Sigmoid colon (tissue), 7 donors: ENCODE measurements at regions of chr10 and their contacts with region 1.

Region 1: GRCh38 chr10:125060826-125061556 is 99.4 kb downstream of the CTBP2 start:
- DNase-seq: peak; percentile 93
- H3K4me3 ChIP-seq: peak overlapping the region in 3 of 4 donors; percentile 4 to 21 (median 14)
- H3K27ac ChIP-seq: peak overlapping the region; percentile 78 to 96 (median 84)
- H3K4me1 ChIP-seq: peaks cover 0 to 99% (median 98%) of the 10 kb centered on the region in 4 donors
- H3K27me3 ChIP-seq: no peaks in the 10 kb centered on the region
- CTCF ChIP-seq: peak; percentile 70 to 88 (median 86)
- EP300 ChIP-seq: peak in 2 of 4 donors; percentile 12 to 55
- POLR2A ChIP-seq: no peak

Region 2: DNA sequence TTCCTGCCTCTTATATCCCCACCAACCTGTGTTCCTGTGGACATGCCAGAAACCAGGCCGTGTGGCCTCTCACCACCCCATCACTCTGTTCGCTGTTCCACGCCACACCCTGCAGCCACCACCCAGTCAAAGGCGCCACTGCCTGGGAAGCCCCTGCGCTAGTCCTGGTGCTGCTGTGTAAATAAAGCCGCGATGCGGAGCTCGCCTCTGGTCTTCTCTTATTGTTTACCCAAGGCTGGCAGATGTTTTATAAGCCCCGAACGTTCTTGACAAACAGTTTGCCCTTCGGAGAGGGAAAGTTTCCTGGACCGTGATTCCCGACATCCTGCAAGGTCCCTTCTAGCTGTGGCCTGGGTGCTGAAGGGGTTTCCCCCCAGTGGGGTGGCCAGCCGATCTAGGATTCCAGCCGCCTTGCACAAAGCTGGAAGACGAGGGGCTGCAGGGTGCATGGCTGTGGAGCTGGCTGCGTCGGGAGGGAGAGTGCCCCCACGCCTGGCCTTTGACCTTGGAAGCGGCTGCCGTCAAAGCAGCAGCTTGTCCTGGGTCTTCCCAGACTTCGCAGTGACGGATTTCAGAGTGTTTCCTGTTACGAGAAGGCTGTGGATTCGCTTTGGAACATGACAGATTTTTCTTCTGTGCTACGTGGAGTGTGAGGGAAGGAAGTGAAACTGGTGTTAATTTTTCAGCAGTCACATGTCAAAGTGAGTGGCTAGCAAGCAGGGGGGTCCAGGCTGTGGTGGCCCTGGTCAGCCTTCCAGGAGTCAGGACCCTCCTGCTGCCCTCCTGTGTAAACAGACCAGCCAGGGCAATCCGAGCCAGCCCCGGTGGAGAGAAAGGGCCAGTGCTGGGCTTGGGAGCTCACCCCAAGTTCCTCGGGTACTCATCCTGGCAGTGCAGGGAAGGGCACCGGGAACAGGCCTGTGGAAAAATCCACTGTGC is 537.8 kb before region 1 on chr10:
- intact Hi-C with region 1: loop called (anchors 10 kb)
- DNase-seq: peak; percentile 71
- H3K4me3 ChIP-seq: peak overlapping the region in 3 of 4 donors; percentile 3 to 15 (median 10)
- H3K27ac ChIP-seq: peak overlapping the region; percentile 23 to 92 (median 84)
- H3K4me1 ChIP-seq: peaks cover 0 to 59% (median 42%) of the 10 kb centered on the region in 4 donors
- H3K27me3 ChIP-seq: no peaks in the 10 kb centered on the region
- CTCF ChIP-seq: no peak
- EP300 ChIP-seq: peak in 1 of 4 donors; percentile 16
- POLR2A ChIP-seq: no peak

Region 3: DNA sequence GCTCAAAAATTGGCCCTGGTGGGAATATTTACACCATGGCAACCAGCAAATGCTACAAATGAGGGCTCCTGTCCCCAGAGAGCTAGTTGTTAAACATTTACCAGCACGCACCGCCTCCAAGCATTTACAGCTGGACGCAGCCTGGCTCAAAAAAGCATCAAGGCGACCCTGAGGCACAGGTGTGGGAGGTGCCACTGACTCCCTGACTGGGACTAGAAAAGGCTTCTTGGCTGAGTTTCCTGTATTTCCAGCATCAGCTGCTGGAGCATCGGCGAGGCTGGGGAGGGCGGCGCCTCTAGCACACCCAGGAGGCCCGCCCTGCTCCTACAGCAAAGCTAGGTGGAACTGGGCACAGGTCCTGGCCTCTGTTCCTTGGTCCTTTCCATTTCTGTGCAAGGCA is 162.5 kb before region 1 on chr10:
- intact Hi-C with region 1: no loop called
- DNase-seq: no peak
- H3K4me3 ChIP-seq: no peak overlapping the region
- H3K27ac ChIP-seq: no peak overlapping the region
- H3K4me1 ChIP-seq: no peaks in the 10 kb centered on the region
- H3K27me3 ChIP-seq: peaks cover 0 to 7% (median 0%) of the 10 kb centered on the region in 3 donors
- CTCF ChIP-seq: no peak
- EP300 ChIP-seq: no peak
- POLR2A ChIP-seq: no peak

Region 4: GRCh38 chr10:124916585-124917427 is 144.2 kb before region 1 on chr10:
- intact Hi-C with region 1: loop called (anchors 5 kb)
- DNase-seq: peak; percentile 99
- H3K4me3 ChIP-seq: peak overlapping the region; percentile 72 to 94 (median 87)
- H3K27ac ChIP-seq: peak overlapping the region; percentile 93 to 100 (median 96)
- H3K4me1 ChIP-seq: peaks cover 0 to 52% (median 45%) of the 10 kb centered on the region in 4 donors
- H3K27me3 ChIP-seq: no peaks in the 10 kb centered on the region
- CTCF ChIP-seq: no peak
- EP300 ChIP-seq: peak in 1 of 4 donors; percentile 42
- POLR2A ChIP-seq: peak; percentile 69 to 78

Region 5: DNA sequence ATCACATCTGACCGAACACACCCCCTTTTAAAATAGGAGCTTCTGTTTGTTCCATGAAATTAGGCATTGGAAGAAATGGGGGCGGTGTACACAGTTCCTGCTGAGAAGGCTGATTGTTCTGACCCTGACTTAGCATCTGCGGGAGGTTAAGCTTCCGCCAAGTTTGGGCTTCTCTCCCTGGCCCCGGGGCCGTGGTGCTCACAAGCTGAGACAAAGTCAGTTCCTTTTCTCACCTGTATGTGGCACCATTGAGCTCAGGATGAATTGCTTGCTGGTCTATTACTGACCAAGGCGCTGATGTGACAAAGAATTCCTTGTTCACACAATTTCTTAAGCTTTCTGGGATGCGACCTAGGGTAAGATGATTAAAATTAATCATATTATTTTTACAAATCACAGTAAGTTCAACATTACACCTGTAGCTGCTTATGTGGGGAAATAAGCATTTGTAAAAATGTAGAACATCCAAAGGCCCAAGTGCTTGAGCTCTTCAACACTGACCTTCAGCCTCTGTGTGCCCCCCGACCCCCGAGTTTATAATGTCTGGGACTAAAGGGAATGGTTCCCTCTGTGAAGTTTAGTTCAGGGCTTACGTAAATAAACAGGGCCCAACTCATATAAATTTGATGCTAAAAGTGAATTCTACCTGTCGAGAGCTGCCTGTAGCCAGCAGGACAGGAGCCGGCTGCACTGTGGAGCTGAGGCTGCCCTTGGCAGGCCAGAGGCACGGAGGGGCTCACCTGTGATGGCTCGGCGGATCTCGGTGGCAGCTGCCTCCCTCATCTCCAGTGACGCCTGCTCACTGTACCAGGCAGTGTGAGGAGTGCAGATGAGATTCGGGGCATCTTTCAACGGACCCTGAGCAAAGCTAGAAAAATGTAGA is 68.3 kb before region 1 on chr10:
- intact Hi-C with region 1: loop called (anchors 2 kb)
- DNase-seq: peak; percentile 88
- H3K4me3 ChIP-seq: no peak overlapping the region
- H3K27ac ChIP-seq: peak overlapping the region in 3 of 4 donors; percentile 11 to 53 (median 37)
- H3K4me1 ChIP-seq: peaks cover 0 to 10% (median 2%) of the 10 kb centered on the region in 4 donors
- H3K27me3 ChIP-seq: no peaks in the 10 kb centered on the region
- CTCF ChIP-seq: peak; percentile 46 to 85 (median 74)
- EP300 ChIP-seq: no peak
- POLR2A ChIP-seq: no peak

Region 6: DNA sequence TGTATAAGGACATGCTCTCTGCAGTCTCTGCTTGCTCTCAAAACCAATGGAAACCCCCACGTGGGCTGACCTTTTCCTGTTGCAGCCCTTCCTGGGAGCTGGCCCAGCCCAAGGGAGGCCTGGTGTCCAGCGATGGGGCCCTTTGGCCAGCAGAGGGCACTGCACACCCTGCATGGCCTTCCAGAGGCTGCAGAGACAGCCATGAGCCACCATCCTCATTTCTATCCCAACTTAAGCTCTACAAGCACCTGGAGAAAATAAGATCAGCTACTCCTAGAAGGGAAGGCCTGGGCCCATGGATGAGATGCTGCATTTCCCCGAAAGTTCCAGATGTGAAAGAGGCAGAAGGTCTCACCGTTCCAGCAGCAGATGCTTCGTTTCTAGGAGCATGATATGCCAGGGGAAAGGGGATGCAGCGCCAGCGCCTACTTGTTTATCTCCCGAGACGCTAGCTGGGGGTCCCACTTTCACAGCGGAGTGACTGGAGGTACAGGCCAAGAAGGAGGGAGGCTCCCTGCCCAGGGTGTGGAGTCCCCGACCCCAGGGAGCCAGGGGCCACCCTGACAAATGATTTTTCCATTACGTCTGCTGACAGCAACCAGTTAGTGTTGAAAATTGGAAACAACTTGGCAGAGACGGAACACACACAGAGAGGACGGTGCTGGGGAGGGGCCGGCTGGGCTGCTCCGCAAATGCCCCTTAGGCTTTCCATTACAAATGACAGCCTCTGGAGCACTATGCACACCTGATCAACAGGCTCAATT is 12.7 kb before region 1 on chr10:
- intact Hi-C with region 1: loop called (anchors 2 kb)
- DNase-seq: peak; percentile 94
- H3K4me3 ChIP-seq: no peak overlapping the region
- H3K27ac ChIP-seq: peak overlapping the region; percentile 50 to 65 (median 56)
- H3K4me1 ChIP-seq: peaks cover 0 to 58% (median 46%) of the 10 kb centered on the region in 4 donors
- H3K27me3 ChIP-seq: no peaks in the 10 kb centered on the region
- CTCF ChIP-seq: peak; percentile 86 to 98 (median 94)
- EP300 ChIP-seq: no peak
- POLR2A ChIP-seq: no peak

Region 7: GRCh38 chr10:125144693-125145623 is 84.0 kb after region 1 on chr10:
- intact Hi-C with region 1: loop called (anchors 5 kb)
- DNase-seq: no peak
- H3K4me3 ChIP-seq: no peak overlapping the region
- H3K27ac ChIP-seq: peak overlapping the region; percentile 7 to 98 (median 45)
- H3K4me1 ChIP-seq: peaks cover 0 to 81% (median 76%) of the 10 kb centered on the region in 4 donors
- H3K27me3 ChIP-seq: no peaks in the 10 kb centered on the region
- CTCF ChIP-seq: peak in 1 of 4 experiments; percentile 48
- EP300 ChIP-seq: no peak
- POLR2A ChIP-seq: no peak